ENCODE measurements at regions of chr1 and their contacts with region 1.

Region 1: DNA sequence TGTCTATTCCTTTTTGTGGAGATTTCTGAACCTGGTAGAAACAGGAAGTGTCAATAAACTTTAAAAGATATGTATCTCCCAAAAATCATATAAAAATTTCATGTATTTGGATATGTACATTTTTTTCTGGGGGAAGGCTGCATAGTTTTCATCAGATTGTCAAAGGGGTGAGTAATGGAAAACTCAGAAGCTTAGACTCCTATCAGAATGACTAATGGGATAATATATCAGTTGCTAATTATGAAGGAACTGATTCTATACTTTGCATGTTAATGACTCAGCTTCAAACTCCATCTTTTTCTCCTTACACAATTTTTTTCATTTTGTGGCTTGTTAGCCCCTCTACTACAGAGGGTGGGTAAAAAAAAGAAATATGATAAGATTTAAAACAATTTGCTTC is 55.9 kb downstream of the GON4L start:
- ATAC-seq: peak in 3 of 8 experiments; percentile 64 to 93 (median 83)
- H3K4me3 ChIP-seq: no peak overlapping the region
- H3K27ac ChIP-seq: no peak overlapping the region
- H3K4me1 ChIP-seq: no peaks in the 10 kb centered on the region

Region 2: GRCh38 chr1:155648551-155649147 is 152.5 kb before region 1 on chr1:
- in situ Hi-C with region 1: no loop called
- ATAC-seq: peak; percentile 90 to 99 (median 99)
- H3K4me3 ChIP-seq: no peak overlapping the region
- H3K27ac ChIP-seq: no peak overlapping the region
- H3K4me1 ChIP-seq: peaks cover 4 to 6% of the 10 kb centered on the region in 2 donors

Region 3: DNA sequence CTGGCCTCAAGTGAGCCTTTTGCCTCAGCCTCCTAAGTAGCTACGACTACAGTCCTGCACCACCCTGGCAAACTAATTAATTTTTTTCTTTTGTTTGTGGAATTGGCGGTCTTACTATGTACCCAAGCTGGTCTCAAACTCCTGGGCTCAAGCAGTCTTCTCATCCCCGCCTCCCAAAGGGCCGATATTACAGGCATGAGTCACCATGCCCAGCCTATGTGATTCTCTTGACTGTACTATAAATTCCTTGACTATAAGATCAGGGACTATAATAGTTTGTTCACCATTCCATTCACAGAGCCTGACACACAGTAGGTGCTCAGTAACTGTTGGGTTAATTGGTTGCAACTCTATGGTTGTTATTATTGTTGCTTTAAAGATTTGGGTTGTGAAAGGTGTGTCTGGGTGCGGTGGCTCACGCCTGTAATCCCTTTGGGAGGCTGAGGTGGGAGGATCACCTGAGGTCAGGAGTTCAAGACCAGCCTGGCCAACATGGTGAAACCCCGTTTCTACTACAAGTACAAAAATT is 95.0 kb before region 1 on chr1:
- in situ Hi-C with region 1: loop called in 1 of 9 experiments (anchors 25 kb)
- ATAC-seq: peak in 2 of 8 experiments; percentile 33 to 52
- H3K4me3 ChIP-seq: no peak overlapping the region
- H3K27ac ChIP-seq: no peak overlapping the region
- H3K4me1 ChIP-seq: no peaks in the 10 kb centered on the region

Measured in motor neuron (in vitro differentiated cells).